ENCODE measurements at regions of chrX and their contacts with region 1.

Region 1: GRCh38 chrX:119468930-119469635 is 839 bp downstream of the SLC25A5 start:
- DNase-seq: peak; percentile 93
- H3K4me3 Mint-ChIP-seq: peak overlapping the region; percentile 100
- H3K27ac Mint-ChIP-seq: peak overlapping the region; percentile 84
- H3K4me1 Mint-ChIP-seq: no peaks in the 10 kb centered on the region
- H3K27me3 Mint-ChIP-seq: no peaks in the 10 kb centered on the region
- CTCF ChIP-seq: peak; percentile 66

Region 2: DNA sequence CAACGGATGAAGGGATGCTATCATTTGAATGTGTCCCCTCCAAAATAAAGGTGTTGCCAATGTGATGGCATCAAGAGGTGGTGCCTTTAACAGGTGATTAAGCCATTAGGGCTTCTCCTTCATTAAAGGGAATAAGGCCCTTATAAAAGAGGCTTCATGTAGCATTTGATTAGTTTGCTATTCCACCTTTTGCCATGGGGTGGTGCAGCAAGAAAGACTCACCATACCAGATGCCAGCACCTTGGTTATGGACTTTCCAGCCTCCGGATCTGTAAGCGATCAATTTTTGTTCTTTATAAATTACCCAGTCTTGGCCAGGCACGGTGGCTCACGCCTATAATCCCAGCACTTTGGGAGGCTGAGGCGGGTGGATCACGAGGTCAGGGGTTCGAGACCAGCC is 77.8 kb before region 1 on chrX:
- CTCF ChIA-PET with region 1: no interaction called
- intact Hi-C with region 1: loop called (anchors 5 kb)
- DNase-seq: peak; percentile 47
- H3K4me3 Mint-ChIP-seq: no peak overlapping the region
- H3K27ac Mint-ChIP-seq: no peak overlapping the region
- H3K4me1 Mint-ChIP-seq: peaks cover 14% of the 10 kb centered on the region
- H3K27me3 Mint-ChIP-seq: no peaks in the 10 kb centered on the region
- CTCF ChIP-seq: peak; percentile 16

Region 3: GRCh38 chrX:119429471-119429870 is 39.6 kb before region 1 on chrX:
- CTCF ChIA-PET with region 1: no interaction called
- intact Hi-C with region 1: no loop called
- DNase-seq: no peak
- H3K4me3 Mint-ChIP-seq: no peak overlapping the region
- H3K27ac Mint-ChIP-seq: no peak overlapping the region
- H3K4me1 Mint-ChIP-seq: no peaks in the 10 kb centered on the region
- H3K27me3 Mint-ChIP-seq: no peaks in the 10 kb centered on the region
- CTCF ChIP-seq: no peak

Region 4: GRCh38 chrX:119669424-119670037 is 200.4 kb after region 1 on chrX:
- CTCF ChIA-PET with region 1: no interaction called
- intact Hi-C with region 1: no loop called
- DNase-seq: no peak
- H3K4me3 Mint-ChIP-seq: no peak overlapping the region
- H3K27ac Mint-ChIP-seq: no peak overlapping the region
- H3K4me1 Mint-ChIP-seq: peaks cover 10% of the 10 kb centered on the region
- H3K27me3 Mint-ChIP-seq: no peaks in the 10 kb centered on the region
- CTCF ChIP-seq: no peak